Colonic mucosa (tissue), 4 donors: ENCODE measurements at regions of chr16 and their contacts with region 1.

Region 1: DNA sequence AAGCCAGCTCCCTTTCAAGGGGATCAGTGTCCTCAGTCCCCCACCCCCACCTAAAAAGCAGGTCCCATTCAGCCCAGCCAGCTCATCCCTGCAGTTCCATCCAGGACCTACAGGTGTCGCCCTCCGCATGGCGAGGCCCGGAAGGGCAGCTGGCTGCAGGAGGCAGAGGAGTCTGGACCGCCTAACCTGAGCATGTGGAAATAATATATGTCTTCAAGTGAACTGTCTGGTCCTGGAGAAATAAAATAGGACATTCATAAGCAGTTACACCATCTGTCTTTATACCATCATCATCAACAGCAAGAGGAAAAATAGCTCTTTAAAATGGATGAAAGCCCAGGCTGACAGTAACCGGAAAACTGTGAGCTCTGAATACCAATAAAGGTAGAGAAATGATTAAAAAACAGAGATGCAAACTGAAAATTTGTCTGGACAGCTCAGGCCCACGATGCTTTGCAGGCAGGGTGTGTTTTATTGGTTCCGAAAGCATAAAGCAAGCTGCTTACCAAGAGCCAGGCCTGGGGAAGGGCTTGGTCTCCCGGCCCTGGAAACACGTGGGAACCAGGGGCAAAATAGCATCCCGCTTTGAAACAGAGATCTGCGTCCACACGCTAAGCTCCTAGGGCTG is 215.2 kb downstream of the ZFHX3 start:
- DNase-seq: peak; percentile 89
- H3K4me3 ChIP-seq: no peak overlapping the region
- H3K27ac ChIP-seq: no peak overlapping the region
- H3K4me1 ChIP-seq: peaks cover 4% of the 10 kb centered on the region
- H3K27me3 ChIP-seq: no peaks in the 10 kb centered on the region
- CTCF ChIP-seq: peak; percentile 97

Region 2: GRCh38 chr16:73047518-73048291 is 215.0 kb after region 1 on chr16 and contains the start of gene ZFHX3:
- intact Hi-C with region 1: loop called (anchors 10 kb)
- DNase-seq: peak; percentile 83
- H3K4me3 ChIP-seq: peak within 1 kb of the TSS; percentile 90
- H3K27ac ChIP-seq: peak within 1 kb of the TSS; percentile 88
- H3K4me1 ChIP-seq: peaks cover 4% of the 10 kb centered on the region
- H3K27me3 ChIP-seq: no peaks in the 10 kb centered on the region
- CTCF ChIP-seq: no peak
- total RNA-seq, gene ZFHX3: 10.5 to 12.8 TPM

Region 3: DNA sequence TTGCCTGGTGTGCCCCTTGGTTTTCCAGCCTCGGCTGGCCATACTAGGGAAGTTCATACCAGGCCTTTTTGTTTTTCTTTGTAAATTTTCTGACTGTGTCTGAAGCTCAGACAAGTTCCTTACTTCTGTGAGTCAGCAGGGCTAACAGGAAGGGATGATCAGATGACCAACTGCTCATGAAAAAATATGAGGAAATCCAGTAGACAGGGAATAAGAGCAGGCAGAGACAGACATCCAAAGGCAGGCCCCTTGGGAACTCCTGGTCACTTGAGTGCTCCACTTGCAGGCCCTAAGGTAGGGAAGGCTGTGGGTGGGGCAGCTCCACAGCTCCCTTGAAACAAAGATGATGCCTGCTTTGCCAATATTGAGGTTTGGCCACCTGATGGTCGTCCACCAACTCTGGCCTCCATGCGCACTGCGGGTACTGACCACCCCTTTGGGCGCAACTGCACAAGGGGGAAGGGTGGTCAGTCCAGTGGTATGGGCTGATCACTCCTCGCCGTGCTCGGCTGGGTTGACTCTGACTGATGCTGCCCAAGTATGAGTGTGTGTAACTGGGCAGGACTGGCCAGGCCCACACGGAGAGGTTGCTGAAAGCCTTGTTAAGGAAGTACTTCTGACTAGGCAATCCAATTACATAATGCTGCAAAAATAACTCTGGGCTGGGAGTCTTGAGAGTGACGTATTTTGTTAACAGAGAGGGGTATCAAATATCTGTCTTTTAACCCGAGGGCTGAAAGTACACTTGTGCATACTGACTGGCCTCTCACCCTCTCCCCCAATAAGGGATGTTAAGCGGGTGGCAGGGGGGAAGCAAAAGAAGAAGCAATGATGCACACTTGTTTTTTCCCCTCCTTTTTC is 236.0 kb after region 1 on chr16:
- intact Hi-C with region 1: no loop called
- DNase-seq: no peak
- H3K4me3 ChIP-seq: no peak overlapping the region
- H3K27ac ChIP-seq: peak overlapping the region; percentile 45
- H3K4me1 ChIP-seq: peaks cover 3% of the 10 kb centered on the region
- H3K27me3 ChIP-seq: peaks cover 19% of the 10 kb centered on the region
- CTCF ChIP-seq: no peak